CD4-positive, alpha-beta T cell (primary cell): ENCODE measurements at regions of chr5 and their contacts with region 1.

Region 1: GRCh38 chr5:100535060-100536005 is at the start of gene FAM174A:
- DNase-seq: peak; percentile 90 to 98 (median 92)
- ATAC-seq: peak; percentile 86
- H3K4me3 ChIP-seq: peak within 1 kb of the TSS; percentile 83
- H3K4me3 Mint-ChIP-seq: peak within 1 kb of the TSS; percentile 92
- H3K27ac ChIP-seq: peak within 1 kb of the TSS; percentile 62 to 89
- H3K27ac Mint-ChIP-seq: peak within 1 kb of the TSS; percentile 89
- H3K4me1 ChIP-seq: peaks cover 13% of the 10 kb centered on the region
- H3K4me1 Mint-ChIP-seq: peaks cover 35% of the 10 kb centered on the region
- H3K27me3 ChIP-seq: no peaks in the 10 kb centered on the region
- H3K27me3 Mint-ChIP-seq: no peaks in the 10 kb centered on the region
- CTCF ChIP-seq: no peak
- total RNA-seq, gene FAM174A: 5.4 to 6.2 TPM

Region 2: DNA sequence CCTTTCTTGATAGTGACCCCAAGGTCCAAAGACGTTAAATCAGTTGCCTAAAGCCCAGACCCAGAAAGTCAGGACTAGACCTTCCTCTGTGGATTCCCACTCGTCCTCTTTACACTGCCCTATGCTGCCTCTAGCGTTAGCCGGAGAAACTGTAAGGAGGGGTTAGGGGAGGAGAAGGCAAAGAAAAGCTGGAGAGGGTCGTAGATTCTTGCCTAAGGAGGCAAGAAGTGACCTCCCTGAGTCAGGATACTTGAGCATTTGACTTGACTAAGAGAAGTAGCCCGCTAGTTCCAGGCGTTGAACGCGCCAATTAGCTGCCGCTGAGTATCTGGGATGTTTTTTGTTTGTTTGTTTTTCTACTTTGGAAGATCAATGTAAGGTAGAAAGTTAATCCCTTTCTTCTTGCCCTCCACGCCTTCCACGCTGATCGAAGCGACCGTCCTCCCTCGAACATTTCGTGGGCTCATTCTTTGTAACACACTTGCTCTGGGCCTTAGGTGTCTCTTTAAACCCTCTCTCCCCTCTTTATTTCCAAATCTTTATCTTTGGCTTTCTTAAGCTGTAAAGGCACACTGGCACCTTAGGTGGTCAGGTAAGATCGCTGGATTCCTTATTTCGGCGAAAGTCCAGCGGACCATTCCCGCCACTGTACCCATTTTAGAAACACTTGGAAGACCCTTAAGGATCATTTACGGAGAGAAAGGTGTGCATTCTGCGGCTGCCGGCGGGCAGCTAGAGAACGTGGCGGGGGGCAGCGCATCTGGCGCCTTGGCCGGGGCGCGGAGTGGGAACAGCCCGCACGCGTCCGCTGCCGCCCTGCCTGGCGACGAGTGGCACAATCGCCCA is 1767.0 kb before region 1 on chr5:
- CTCF ChIA-PET with region 1: no interaction called
- POLR2A ChIA-PET with region 1: no interaction called
- intact Hi-C with region 1: loop called in 1 of 2 experiments (anchors 10 kb)
- DNase-seq: peak in 8 of 14 experiments; percentile 7 to 64 (median 35)
- ATAC-seq: peak; percentile 19
- H3K4me3 ChIP-seq: peak overlapping the region; percentile 62
- H3K4me3 Mint-ChIP-seq: peak overlapping the region; percentile 99
- H3K27ac ChIP-seq: no peak overlapping the region
- H3K27ac Mint-ChIP-seq: no peak overlapping the region
- H3K4me1 ChIP-seq: peaks cover 43% of the 10 kb centered on the region
- H3K4me1 Mint-ChIP-seq: peaks cover 37% of the 10 kb centered on the region
- H3K27me3 ChIP-seq: peaks cover 25 to 31% of the 10 kb centered on the region in 2 experiments
- H3K27me3 Mint-ChIP-seq: peaks cover 62% of the 10 kb centered on the region
- CTCF ChIP-seq: peak; percentile 87

Region 3: DNA sequence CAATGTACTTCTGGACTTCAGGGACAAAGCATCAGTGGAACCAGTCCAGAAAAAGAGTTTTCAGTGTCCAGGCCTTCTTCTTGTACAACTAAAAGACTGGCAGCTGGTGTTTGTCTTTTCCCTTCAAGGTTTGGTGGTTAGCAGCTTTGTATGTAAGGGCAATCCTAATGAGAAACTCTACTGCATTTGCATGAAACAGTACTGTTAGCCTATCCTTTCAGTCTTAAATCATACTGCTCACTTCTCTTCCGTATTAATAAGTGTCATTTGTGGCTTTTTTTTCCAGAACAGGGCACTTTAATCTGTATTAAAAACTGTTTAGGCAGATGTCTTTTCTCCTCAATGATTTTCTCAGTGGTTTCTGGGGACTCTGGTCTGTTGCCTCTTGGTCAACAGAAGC is 48.7 kb after region 1 on chr5:
- CTCF ChIA-PET with region 1: no interaction called
- POLR2A ChIA-PET with region 1: no interaction called
- intact Hi-C with region 1: no loop called
- DNase-seq: no peak
- ATAC-seq: no peak
- H3K4me3 ChIP-seq: no peak overlapping the region
- H3K4me3 Mint-ChIP-seq: no peak overlapping the region
- H3K27ac ChIP-seq: no peak overlapping the region
- H3K27ac Mint-ChIP-seq: no peak overlapping the region
- H3K4me1 ChIP-seq: no peaks in the 10 kb centered on the region
- H3K4me1 Mint-ChIP-seq: no peaks in the 10 kb centered on the region
- H3K27me3 ChIP-seq: no peaks in the 10 kb centered on the region
- H3K27me3 Mint-ChIP-seq: no peaks in the 10 kb centered on the region
- CTCF ChIP-seq: no peak

Region 4: GRCh38 chr5:100777680-100778281 is 242.4 kb after region 1 on chr5:
- CTCF ChIA-PET with region 1: no interaction called
- POLR2A ChIA-PET with region 1: no interaction called
- intact Hi-C with region 1: loop called in 1 of 2 experiments (anchors 10 kb)
- DNase-seq: peak in 4 of 14 experiments; percentile 26 to 66 (median 50)
- ATAC-seq: peak; percentile 29
- H3K4me3 ChIP-seq: no peak overlapping the region
- H3K4me3 Mint-ChIP-seq: no peak overlapping the region
- H3K27ac ChIP-seq: no peak overlapping the region
- H3K27ac Mint-ChIP-seq: no peak overlapping the region
- H3K4me1 ChIP-seq: peaks cover 7% of the 10 kb centered on the region
- H3K4me1 Mint-ChIP-seq: peaks cover 37% of the 10 kb centered on the region
- H3K27me3 ChIP-seq: no peaks in the 10 kb centered on the region
- H3K27me3 Mint-ChIP-seq: no peaks in the 10 kb centered on the region
- CTCF ChIP-seq: no peak